ENCODE measurements at regions of chr19 and their contacts with region 1.

Region 1: GRCh38 chr19:13784731-13785452 is 10.4 kb upstream of the ZSWIM4 start:
- DNase-seq: peak; percentile 67 to 86
- ATAC-seq: peak; percentile 72 to 80 (median 80)
- H3K4me3 ChIP-seq: no peak overlapping the region
- H3K4me3 Mint-ChIP-seq: peak overlapping the region; percentile 45
- H3K27ac ChIP-seq: no peak overlapping the region
- H3K27ac Mint-ChIP-seq: peak overlapping the region; percentile 21 to 75
- H3K4me1 ChIP-seq: peaks cover 45% of the 10 kb centered on the region
- H3K4me1 Mint-ChIP-seq: peaks cover 21 to 26% of the 10 kb centered on the region in 2 donors
- H3K27me3 ChIP-seq: no peaks in the 10 kb centered on the region
- H3K27me3 Mint-ChIP-seq: no peaks in the 10 kb centered on the region
- CTCF ChIP-seq: peak; percentile 79

Region 2: DNA sequence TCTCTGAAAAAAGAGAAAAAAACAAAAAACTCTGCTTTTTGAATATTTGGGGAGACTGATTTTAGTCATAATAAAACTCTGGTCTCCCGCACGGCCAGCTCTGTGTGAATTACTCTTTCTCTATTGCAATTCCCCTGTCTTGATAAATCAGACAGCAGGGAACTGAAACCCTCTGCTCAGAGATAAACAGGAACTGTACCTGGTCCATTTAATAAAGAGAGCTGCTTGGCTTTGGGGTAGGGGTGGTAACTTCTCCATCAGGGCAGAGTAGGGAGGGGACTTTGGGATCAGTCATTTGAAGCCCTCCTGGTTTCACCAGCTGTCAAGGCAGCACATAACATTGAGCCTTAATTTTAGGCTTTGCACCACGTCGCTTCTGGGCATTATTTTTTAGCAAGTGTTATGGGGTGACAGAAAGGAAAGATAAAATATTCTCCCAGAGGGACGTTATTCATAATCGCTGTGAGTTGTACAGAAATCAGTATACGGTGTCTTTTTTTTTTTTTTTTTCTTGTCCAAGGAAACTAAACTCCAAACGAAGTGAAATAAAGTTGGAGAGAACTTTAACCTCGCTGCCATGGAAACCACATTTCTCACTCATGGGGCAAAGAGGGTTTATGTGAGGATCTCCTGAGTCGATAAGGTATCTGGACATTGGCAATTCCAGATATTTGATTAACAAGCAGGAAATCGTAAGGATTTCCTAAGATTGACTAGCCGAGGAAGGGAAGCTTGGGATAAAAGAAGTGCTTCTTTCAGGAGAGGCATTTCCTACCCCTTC is 119.6 kb before region 1 on chr19:
- intact Hi-C with region 1: no loop called
- DNase-seq: no peak
- ATAC-seq: no peak
- H3K4me3 ChIP-seq: no peak overlapping the region
- H3K4me3 Mint-ChIP-seq: no peak overlapping the region
- H3K27ac ChIP-seq: no peak overlapping the region
- H3K27ac Mint-ChIP-seq: no peak overlapping the region
- H3K4me1 ChIP-seq: no peaks in the 10 kb centered on the region
- H3K4me1 Mint-ChIP-seq: no peaks in the 10 kb centered on the region
- H3K27me3 ChIP-seq: no peaks in the 10 kb centered on the region
- H3K27me3 Mint-ChIP-seq: peaks cover 0 to 3% of the 10 kb centered on the region in 2 donors
- CTCF ChIP-seq: no peak

Region 3: DNA sequence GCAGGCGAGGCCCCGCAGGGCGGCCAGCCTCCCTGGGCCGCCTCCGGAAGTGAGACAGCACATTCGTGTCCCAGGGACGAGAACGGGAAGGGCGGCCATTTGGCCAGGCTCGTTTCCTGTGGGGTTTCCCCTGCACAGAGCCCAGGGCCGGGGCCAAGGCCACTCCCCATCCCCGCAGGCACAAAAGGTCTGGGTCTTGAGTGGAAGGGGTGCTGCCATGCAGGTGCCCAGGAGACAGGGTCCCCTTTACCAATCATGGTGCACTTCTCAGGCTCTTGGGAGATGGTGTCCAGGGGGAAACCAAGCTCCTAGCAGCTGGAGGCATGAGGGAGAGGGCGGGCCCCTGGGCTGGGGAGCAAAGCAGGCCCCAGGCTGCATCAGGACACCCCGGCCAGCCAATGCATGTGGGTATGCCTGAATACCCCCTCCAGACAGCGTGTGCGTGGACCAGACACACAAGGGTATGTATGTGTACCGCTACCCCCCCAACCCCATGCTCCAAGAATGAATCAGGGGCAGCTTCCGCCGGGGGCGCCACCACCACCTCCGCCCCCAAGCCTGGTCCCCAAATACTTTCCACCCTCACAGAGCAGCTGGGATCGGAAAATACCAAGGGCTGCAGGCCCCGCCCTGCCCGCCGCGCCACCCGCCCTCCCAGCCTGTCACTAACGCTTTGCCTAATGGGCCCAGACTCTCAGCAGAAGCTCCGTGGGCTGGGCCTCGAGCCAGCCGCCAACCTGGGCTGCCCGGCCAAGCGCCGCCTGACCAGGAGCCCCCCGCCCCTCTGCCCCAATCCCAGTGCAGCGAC is 54.4 kb after region 1 on chr19:
- intact Hi-C with region 1: loop called (anchors 2 kb)
- DNase-seq: peak; percentile 80 to 87
- ATAC-seq: peak; percentile 22 to 52 (median 29)
- H3K4me3 ChIP-seq: peak overlapping the region; percentile 69
- H3K4me3 Mint-ChIP-seq: peak overlapping the region; percentile 93
- H3K27ac ChIP-seq: peak overlapping the region; percentile 94
- H3K27ac Mint-ChIP-seq: peak overlapping the region; percentile 99 to 100
- H3K4me1 ChIP-seq: peaks cover 89% of the 10 kb centered on the region
- H3K4me1 Mint-ChIP-seq: peaks cover 45 to 74% of the 10 kb centered on the region in 2 donors
- H3K27me3 ChIP-seq: no peaks in the 10 kb centered on the region
- H3K27me3 Mint-ChIP-seq: no peaks in the 10 kb centered on the region
- CTCF ChIP-seq: no peak